ENCODE measurements at regions of chr7 and their contacts with region 1.

Region 1: DNA sequence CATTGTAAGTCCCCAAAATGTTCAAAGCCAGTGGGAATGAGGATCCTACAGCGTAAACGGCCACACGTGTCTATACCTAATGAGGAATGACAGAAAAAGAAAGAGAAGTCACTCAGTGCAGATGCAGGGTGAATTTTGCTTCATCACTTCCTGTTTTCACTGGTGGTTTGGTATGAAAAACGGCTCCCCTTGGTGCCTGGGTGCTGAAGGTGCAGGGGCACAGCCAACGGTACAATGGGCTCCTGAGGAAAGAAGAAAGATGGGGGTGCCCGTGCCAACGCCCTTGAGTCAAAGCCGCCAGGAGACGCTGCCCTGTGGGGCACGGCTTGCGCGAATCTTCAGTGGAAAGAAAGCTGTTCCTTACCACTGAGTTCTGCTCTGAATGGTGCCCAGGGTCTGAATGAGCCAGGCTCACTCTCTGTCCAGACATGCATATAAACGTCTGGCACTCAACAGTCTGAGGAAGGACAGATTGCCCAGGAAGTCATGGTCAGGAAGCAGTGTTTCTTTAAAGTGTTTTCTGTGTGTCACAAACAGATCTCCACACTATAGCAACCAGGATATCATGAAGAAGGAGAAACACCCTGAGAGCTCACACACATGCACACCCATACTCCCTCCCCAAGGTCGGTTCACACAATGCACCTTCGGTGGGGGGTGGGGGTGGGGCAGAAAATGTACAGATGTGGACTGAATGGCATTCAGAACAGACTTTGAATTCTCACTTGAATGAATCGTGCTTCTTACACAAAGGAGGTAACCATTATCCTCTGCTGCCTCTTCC is 105.8 kb downstream of the ELMO1 start:
- DNase-seq: peak; percentile 63
- H3K4me3 Mint-ChIP-seq: peak overlapping the region; percentile 98
- H3K27ac Mint-ChIP-seq: peak overlapping the region; percentile 99
- H3K4me1 Mint-ChIP-seq: peaks cover 48% of the 10 kb centered on the region
- H3K27me3 Mint-ChIP-seq: no peaks in the 10 kb centered on the region

Region 2: GRCh38 chr7:36677769-36678437 is 665.0 kb before region 1 on chr7:
- intact Hi-C with region 1: loop called (anchors 5 kb)
- DNase-seq: peak; percentile 37
- H3K4me3 Mint-ChIP-seq: peak overlapping the region; percentile 64
- H3K27ac Mint-ChIP-seq: peak overlapping the region; percentile 87
- H3K4me1 Mint-ChIP-seq: peaks cover 65% of the 10 kb centered on the region
- H3K27me3 Mint-ChIP-seq: no peaks in the 10 kb centered on the region

Region 3: GRCh38 chr7:36967387-36967786 is 375.5 kb before region 1 on chr7:
- intact Hi-C with region 1: loop called (anchors 10 kb)
- DNase-seq: no peak
- H3K4me3 Mint-ChIP-seq: no peak overlapping the region
- H3K27ac Mint-ChIP-seq: no peak overlapping the region
- H3K4me1 Mint-ChIP-seq: peaks cover 39% of the 10 kb centered on the region
- H3K27me3 Mint-ChIP-seq: no peaks in the 10 kb centered on the region

Region 4: GRCh38 chr7:37208528-37208927 is 134.4 kb before region 1 on chr7:
- intact Hi-C with region 1: loop called (anchors 2 kb)
- DNase-seq: peak; percentile 19
- H3K4me3 Mint-ChIP-seq: no peak overlapping the region
- H3K27ac Mint-ChIP-seq: peak overlapping the region; percentile 65
- H3K4me1 Mint-ChIP-seq: peaks cover 21% of the 10 kb centered on the region
- H3K27me3 Mint-ChIP-seq: no peaks in the 10 kb centered on the region

Region 5: GRCh38 chr7:37247861-37248260 is 95.0 kb before region 1 on chr7:
- intact Hi-C with region 1: no loop called
- DNase-seq: no peak
- H3K4me3 Mint-ChIP-seq: no peak overlapping the region
- H3K27ac Mint-ChIP-seq: no peak overlapping the region
- H3K4me1 Mint-ChIP-seq: peaks cover 18% of the 10 kb centered on the region
- H3K27me3 Mint-ChIP-seq: no peaks in the 10 kb centered on the region

Region 6: GRCh38 chr7:37311355-37311754 is 31.5 kb before region 1 on chr7:
- intact Hi-C with region 1: loop called (anchors 1 kb)
- DNase-seq: no peak
- H3K4me3 Mint-ChIP-seq: no peak overlapping the region
- H3K27ac Mint-ChIP-seq: peak overlapping the region; percentile 93
- H3K4me1 Mint-ChIP-seq: peaks cover 43% of the 10 kb centered on the region
- H3K27me3 Mint-ChIP-seq: no peaks in the 10 kb centered on the region

Region 7: GRCh38 chr7:37352974-37353948 is 10.4 kb after region 1 on chr7:
- intact Hi-C with region 1: loop called (anchors 1 kb)
- DNase-seq: peak; percentile 71
- H3K4me3 Mint-ChIP-seq: peak overlapping the region; percentile 90
- H3K27ac Mint-ChIP-seq: peak overlapping the region; percentile 84
- H3K4me1 Mint-ChIP-seq: peaks cover 72% of the 10 kb centered on the region
- H3K27me3 Mint-ChIP-seq: no peaks in the 10 kb centered on the region

Region 8: DNA sequence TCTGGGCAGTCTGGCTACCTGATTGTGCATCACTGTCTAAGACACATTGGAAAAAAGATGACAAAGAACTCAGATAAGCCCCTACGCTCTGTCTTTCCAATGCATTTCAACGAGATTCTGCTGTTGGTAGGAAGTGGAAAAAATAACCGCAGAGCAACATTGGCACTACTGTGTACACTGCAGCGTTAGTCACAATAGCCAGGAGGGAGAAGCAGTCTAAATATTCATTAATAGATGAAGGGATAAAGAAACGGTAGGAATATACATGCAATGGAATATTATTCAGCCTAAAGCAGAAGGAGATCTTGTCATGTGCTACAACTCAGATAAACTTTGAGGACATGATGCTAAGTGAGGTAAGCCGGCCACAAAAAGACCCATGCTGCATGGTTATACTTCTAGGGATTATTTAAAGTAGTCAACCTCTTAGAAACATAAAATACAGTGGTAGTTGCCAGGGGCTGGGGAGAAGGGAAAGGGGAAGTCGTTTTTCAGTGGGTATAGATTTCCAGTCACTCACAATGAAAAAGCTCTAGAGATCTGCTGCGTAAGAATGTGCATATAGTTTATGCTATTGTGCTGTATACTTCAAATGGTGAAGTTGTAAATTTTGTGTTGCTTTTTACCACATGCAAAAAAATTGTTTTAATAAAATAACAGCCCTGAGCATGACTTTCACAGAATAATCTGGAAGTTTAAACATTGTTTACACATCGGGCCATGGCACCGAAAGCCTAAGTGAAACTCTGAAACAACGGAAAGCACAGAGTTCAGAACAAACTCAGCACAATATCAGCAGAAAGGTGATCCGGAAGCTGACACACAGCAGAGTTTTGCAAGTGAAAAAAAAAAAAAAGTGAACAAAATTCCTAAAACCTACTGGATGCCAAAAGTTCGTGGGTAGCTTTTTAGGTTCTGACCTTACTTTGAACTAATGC is 65.7 kb after region 1 on chr7:
- intact Hi-C with region 1: loop called (anchors 1 kb)
- DNase-seq: no peak
- H3K4me3 Mint-ChIP-seq: peak overlapping the region; percentile 80
- H3K27ac Mint-ChIP-seq: peak overlapping the region; percentile 90
- H3K4me1 Mint-ChIP-seq: peaks cover 55% of the 10 kb centered on the region
- H3K27me3 Mint-ChIP-seq: no peaks in the 10 kb centered on the region

Measured in activated T-helper 2 cell treated with anti-CD3 and anti-CD28 coated beads, Interferon-gamma antibody, Interleukin-2, Interleukin-4, amounts not matched to agents 10 μg/mL and 5 μg/mL and 100 μg/mL, durations not matched to agents 14 hours and 24 hours and 36 hours (primary cell).